ENCODE measurements at regions of chr1 and their contacts with region 1.

Region 1: DNA sequence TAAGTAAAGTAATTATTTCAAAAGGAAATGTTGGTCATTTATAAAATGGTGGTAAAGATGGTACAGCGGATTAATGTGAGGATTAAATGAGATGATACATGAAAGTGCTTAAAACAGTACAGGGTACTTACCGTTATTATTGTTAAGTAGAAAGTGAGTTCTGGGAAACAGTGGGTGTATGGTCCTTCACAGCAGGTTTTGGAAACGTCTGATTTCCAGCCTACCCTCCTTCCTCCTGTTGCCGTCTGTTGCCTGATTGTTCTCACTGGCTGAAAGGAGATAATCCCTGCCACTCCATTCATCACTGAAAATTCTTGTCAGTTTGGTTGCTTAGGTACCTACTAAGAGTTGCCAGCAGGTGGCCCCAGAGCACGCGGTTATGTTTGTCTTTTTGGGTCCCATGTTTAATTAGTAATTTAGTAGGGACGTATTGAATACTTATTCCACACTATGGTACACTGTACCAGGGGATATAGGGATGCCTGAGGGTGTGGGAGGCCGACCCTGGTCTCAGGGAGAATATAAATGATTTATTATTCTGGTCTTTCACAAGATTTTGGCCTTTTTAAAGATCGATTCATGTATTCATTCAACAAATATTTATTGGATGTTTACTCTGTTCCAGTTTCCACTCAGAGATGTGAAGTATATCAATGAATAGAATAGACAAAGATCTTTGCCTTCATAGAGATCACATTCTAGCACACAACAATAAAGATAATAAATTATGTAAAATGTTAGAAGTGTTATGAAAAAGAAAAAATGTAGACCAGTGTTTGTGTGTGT is 30.8 kb upstream of the RPTN start:
- DNase-seq: peak in 1 of 2 experiments; percentile 53
- H3K4me3 ChIP-seq: no peak overlapping the region
- H3K27ac ChIP-seq: peak overlapping the region; percentile 40; the same call in 1 of the 2 replicates
- H3K4me1 ChIP-seq: peaks cover 27% of the 10 kb centered on the region
- H3K27me3 ChIP-seq: peaks cover 22% of the 10 kb centered on the region; the same call in 1 of the 2 replicates
- CTCF ChIP-seq: peak; percentile 86

Region 2: DNA sequence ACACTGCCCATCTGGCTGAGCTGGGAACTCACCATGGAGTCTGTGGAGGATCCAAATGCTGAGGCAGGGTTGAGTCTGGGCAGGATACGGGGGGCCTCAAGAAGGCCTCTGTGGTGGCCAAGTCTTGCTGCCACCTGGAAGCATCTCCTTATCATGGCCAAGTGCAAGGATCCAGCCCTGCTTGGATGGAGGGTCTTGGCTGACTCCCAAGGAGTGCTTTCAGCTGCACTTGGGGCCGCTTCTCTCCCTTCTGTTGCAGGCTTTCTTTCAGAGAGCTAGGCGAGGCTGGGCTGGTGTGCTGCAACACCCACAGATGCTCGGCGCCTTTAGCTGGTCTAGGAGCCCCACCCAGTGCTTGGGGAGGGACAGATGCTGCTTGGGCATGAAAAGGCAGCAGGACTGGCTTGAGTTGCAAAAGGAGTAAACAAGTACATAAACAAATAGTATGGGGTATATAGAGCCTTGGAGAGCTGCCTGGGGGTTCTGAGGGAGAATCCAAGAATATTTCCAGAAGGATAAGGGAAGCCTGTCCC is 336.4 kb before region 1 on chr1 and contains the start of gene THEM5:
- CTCF ChIA-PET with region 1: no interaction called
- POLR2A ChIA-PET with region 1: no interaction called
- intact Hi-C with region 1: no loop called
- DNase-seq: no peak
- H3K4me3 ChIP-seq: no peak within 1 kb of the TSS
- H3K27ac ChIP-seq: no peak within 1 kb of the TSS
- H3K4me1 ChIP-seq: no peaks in the 10 kb centered on the region
- H3K27me3 ChIP-seq: no peaks in the 10 kb centered on the region
- CTCF ChIP-seq: no peak
- total RNA-seq, gene THEM5: not detected in 2 replicates

Region 3: GRCh38 chr1:151934048-151934493 is 255.8 kb before region 1 on chr1:
- CTCF ChIA-PET with region 1: no interaction called
- POLR2A ChIA-PET with region 1: no interaction called
- intact Hi-C with region 1: loop called (anchors 5 kb)
- DNase-seq: peak; percentile 54 to 58
- H3K4me3 ChIP-seq: no peak overlapping the region
- H3K27ac ChIP-seq: no peak overlapping the region
- H3K4me1 ChIP-seq: peaks cover 12% of the 10 kb centered on the region; the same call in 1 of the 2 replicates
- H3K27me3 ChIP-seq: no peaks in the 10 kb centered on the region
- CTCF ChIP-seq: peak; percentile 89

Region 4: DNA sequence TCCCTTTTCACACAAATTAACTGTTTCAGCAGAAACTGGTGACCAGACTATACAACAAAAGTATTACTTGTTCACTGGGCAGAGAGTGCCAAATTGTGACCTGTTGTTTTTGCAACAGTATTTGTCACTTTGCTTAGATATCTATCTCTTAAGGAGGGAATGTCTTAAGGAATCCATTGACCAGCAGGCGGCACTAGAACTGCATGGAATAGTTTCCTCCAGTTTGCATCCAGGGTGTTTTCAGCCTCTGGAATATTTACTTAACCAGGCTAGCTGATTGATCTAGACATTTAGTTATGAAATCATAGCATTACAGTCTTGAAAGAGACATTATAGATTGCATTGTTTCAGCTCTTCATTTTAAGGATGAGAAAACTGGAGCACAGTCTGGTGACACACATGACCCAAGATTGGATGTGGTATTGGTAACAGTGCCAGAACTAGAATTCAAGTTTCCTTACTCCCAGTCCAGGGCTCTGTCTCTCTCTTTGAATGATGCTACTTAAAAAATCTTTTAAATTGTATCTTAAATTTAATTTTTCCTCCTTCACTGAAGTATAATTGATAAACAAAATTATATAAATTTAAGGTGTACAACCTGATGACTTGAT is 47.8 kb before region 1 on chr1:
- CTCF ChIA-PET with region 1: interaction called, 7 read pairs
- POLR2A ChIA-PET with region 1: no interaction called
- intact Hi-C with region 1: loop called (anchors 1 kb)
- DNase-seq: peak; percentile 64 to 66
- H3K4me3 ChIP-seq: no peak overlapping the region
- H3K27ac ChIP-seq: no peak overlapping the region
- H3K4me1 ChIP-seq: no peaks in the 10 kb centered on the region
- H3K27me3 ChIP-seq: peaks cover 3% of the 10 kb centered on the region; the same call in 1 of the 2 replicates
- CTCF ChIP-seq: peak; percentile 92

Region 5: DNA sequence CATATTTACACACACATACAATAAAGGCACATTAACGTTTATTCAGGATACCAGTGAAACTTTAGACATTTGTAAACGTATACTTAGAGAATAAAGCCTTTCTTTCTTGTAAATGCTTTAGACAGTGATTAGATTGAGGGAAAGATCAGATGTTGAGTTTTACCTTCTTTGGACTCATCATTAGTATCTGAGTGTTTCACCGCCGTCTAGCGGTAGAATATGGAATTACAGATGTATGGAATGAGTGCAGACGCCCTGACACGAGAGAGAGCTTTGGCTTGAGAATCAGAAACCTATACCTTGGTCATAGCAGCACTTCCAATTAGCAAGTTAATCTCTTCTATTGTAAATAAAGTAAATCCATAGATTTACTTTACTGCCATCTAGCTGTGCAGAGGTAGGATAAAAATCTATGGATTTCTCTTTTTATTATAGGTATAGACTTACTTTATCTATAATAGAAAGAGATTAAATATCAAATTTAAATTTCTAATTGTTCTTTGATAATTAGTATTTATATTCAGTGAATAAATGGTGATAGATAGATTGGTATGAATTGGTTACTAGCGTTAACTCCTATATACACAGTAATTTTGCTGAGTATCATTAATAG is 157.4 kb after region 1 on chr1:
- CTCF ChIA-PET with region 1: no interaction called
- POLR2A ChIA-PET with region 1: no interaction called
- intact Hi-C with region 1: loop called (anchors 1 kb)
- DNase-seq: peak; percentile 33 to 46
- H3K4me3 ChIP-seq: no peak overlapping the region
- H3K27ac ChIP-seq: no peak overlapping the region
- H3K4me1 ChIP-seq: no peaks in the 10 kb centered on the region
- H3K27me3 ChIP-seq: no peaks in the 10 kb centered on the region
- CTCF ChIP-seq: peak; percentile 92

Region 6: DNA sequence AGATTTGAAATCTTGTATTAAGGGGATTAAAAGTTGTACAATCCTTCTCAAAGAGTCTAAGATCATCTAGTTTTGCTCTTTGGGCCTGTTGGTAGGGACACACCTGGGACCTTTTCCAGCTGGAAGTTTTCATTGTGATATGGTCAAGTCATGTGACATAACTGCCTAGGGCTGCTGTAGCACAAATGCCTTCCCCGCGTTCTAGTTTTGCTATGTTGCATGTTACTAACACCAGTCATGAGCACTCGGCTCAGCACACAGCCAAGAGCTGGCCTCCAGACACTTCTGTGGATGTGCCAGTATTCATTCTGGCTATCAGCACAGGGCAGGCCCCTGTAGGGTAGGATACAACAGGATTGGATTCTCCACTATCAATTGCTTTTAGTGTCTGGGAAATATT is 184.6 kb after region 1 on chr1:
- CTCF ChIA-PET with region 1: no interaction called
- POLR2A ChIA-PET with region 1: no interaction called
- intact Hi-C with region 1: no loop called
- DNase-seq: no peak
- H3K4me3 ChIP-seq: no peak overlapping the region
- H3K27ac ChIP-seq: no peak overlapping the region
- H3K4me1 ChIP-seq: no peaks in the 10 kb centered on the region
- H3K27me3 ChIP-seq: peaks cover 40% of the 10 kb centered on the region
- CTCF ChIP-seq: no peak

Region 7: GRCh38 chr1:152459596-152460528 is 270.0 kb after region 1 on chr1:
- CTCF ChIA-PET with region 1: interaction called, 10 read pairs
- POLR2A ChIA-PET with region 1: no interaction called
- intact Hi-C with region 1: loop called (anchors 1 kb)
- DNase-seq: peak; percentile 39
- H3K4me3 ChIP-seq: no peak overlapping the region
- H3K27ac ChIP-seq: no peak overlapping the region
- H3K4me1 ChIP-seq: no peaks in the 10 kb centered on the region
- H3K27me3 ChIP-seq: no peaks in the 10 kb centered on the region
- CTCF ChIP-seq: peak; percentile 72